ENCODE measurements at regions of chr19 and their contacts with region 1.

Region 1: GRCh38 chr19:18058208-18059030 is 28.3 kb downstream of the IL12RB1 start:
- DNase-seq: peak; percentile 62 to 66
- ATAC-seq: peak; percentile 81 to 87
- H3K4me3 ChIP-seq: peak overlapping the region; percentile 14 to 47 (median 36)
- H3K27ac ChIP-seq: peak overlapping the region; percentile 73 to 91 (median 90)
- H3K4me1 ChIP-seq: peaks cover 14% of the 10 kb centered on the region in 2 donors
- H3K27me3 ChIP-seq: no peaks in the 10 kb centered on the region
- CTCF ChIP-seq: peak; percentile 94 to 99 (median 98)
- POLR2A ChIP-seq: peak in 1 of 2 donors; percentile 50

Region 2: GRCh38 chr19:17932485-17933338 is 125.7 kb before region 1 on chr19 and contains the start of gene CCDC124:
- in situ Hi-C with region 1: loop called in 3 of 4 experiments (anchors 10 to 25 kb)
- intact Hi-C with region 1: no loop called
- DNase-seq: peak; percentile 81 to 90
- ATAC-seq: peak; percentile 95 to 96
- H3K4me3 ChIP-seq: peak within 1 kb of the TSS; percentile 73 to 96 (median 88)
- H3K27ac ChIP-seq: peak within 1 kb of the TSS; percentile 88 to 94 (median 90)
- H3K4me1 ChIP-seq: peaks cover 9 to 25% of the 10 kb centered on the region in 2 donors
- H3K27me3 ChIP-seq: no peaks in the 10 kb centered on the region
- CTCF ChIP-seq: peak; percentile 86 to 89 (median 88)
- POLR2A ChIP-seq: peak; percentile 91 to 92
- total RNA-seq, gene CCDC124: 73.1 to 110 (median 81.5) TPM

Region 3: GRCh38 chr19:17938092-17938845 is 120.2 kb before region 1 on chr19:
- in situ Hi-C with region 1: loop called in 3 of 4 experiments (anchors 10 to 25 kb)
- intact Hi-C with region 1: loop called (anchors 2 kb)
- DNase-seq: peak; percentile 42 to 65
- ATAC-seq: peak; percentile 72 to 80
- H3K4me3 ChIP-seq: no peak overlapping the region
- H3K27ac ChIP-seq: no peak overlapping the region
- H3K4me1 ChIP-seq: peaks cover 9 to 16% of the 10 kb centered on the region in 2 donors
- H3K27me3 ChIP-seq: no peaks in the 10 kb centered on the region
- CTCF ChIP-seq: peak; percentile 84 to 94 (median 92)
- POLR2A ChIP-seq: no peak

Region 4: GRCh38 chr19:18000935-18001778 is 57.3 kb before region 1 on chr19:
- in situ Hi-C with region 1: loop called (anchors 5 to 10 kb)
- intact Hi-C with region 1: no loop called
- DNase-seq: peak; percentile 73 to 78
- ATAC-seq: peak; percentile 61 to 68
- H3K4me3 ChIP-seq: peak overlapping the region; percentile 58 to 64 (median 60)
- H3K27ac ChIP-seq: peak overlapping the region; percentile 82 to 83 (median 82)
- H3K4me1 ChIP-seq: peaks cover 0 to 5% of the 10 kb centered on the region in 2 donors
- H3K27me3 ChIP-seq: peaks cover 0 to 12% (median 6%) of the 10 kb centered on the region in 3 donors
- CTCF ChIP-seq: peak in 1 of 5 experiments; percentile 14
- POLR2A ChIP-seq: peak; percentile 68 to 81

Region 5: GRCh38 chr19:18007044-18007916 is 51.1 kb before region 1 on chr19:
- in situ Hi-C with region 1: loop called (anchors 5 to 10 kb)
- intact Hi-C with region 1: loop called (anchors 1 kb)
- DNase-seq: peak; percentile 81 to 84
- ATAC-seq: peak; percentile 61 to 74
- H3K4me3 ChIP-seq: peak overlapping the region; percentile 74 to 99 (median 83)
- H3K27ac ChIP-seq: peak overlapping the region; percentile 89 to 100 (median 95)
- H3K4me1 ChIP-seq: peaks cover under 1 to 12% of the 10 kb centered on the region in 2 donors
- H3K27me3 ChIP-seq: peaks cover 0 to 2% (median 0%) of the 10 kb centered on the region in 3 donors
- CTCF ChIP-seq: peak; percentile 97 to 100 (median 99)
- POLR2A ChIP-seq: peak; percentile 76 to 90

Region 6: DNA sequence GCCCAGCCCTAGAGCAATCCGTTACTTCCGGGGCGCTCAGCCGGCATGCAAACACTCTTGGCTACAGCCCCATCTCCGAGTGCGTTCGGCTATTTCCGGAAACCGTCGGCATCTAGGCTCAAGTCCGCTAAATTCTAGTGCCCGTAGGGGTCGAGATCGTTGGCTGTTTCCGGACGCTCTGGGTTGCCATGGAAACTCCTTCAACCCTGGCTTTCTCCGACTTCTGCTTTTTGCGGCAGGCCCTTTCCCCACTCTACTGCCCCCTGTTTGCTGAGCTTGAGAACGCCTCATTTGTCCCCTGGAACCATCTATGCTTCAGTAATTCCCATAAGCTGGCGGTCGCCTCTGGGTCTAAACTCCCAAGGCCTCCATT is 94.0 kb after region 1 on chr19:
- in situ Hi-C with region 1: no loop called
- intact Hi-C with region 1: loop called (anchors 5 kb)
- DNase-seq: peak; percentile 88 to 93
- ATAC-seq: peak; percentile 63 to 73
- H3K4me3 ChIP-seq: peak overlapping the region; percentile 68 to 86 (median 81)
- H3K27ac ChIP-seq: peak overlapping the region; percentile 97 to 100 (median 98)
- H3K4me1 ChIP-seq: peaks cover 34 to 42% of the 10 kb centered on the region in 2 donors
- H3K27me3 ChIP-seq: no peaks in the 10 kb centered on the region
- CTCF ChIP-seq: peak; percentile 42 to 70 (median 56)
- POLR2A ChIP-seq: no peak